ENCODE measurements at regions of chr2 and their contacts with region 1.

Region 1: DNA sequence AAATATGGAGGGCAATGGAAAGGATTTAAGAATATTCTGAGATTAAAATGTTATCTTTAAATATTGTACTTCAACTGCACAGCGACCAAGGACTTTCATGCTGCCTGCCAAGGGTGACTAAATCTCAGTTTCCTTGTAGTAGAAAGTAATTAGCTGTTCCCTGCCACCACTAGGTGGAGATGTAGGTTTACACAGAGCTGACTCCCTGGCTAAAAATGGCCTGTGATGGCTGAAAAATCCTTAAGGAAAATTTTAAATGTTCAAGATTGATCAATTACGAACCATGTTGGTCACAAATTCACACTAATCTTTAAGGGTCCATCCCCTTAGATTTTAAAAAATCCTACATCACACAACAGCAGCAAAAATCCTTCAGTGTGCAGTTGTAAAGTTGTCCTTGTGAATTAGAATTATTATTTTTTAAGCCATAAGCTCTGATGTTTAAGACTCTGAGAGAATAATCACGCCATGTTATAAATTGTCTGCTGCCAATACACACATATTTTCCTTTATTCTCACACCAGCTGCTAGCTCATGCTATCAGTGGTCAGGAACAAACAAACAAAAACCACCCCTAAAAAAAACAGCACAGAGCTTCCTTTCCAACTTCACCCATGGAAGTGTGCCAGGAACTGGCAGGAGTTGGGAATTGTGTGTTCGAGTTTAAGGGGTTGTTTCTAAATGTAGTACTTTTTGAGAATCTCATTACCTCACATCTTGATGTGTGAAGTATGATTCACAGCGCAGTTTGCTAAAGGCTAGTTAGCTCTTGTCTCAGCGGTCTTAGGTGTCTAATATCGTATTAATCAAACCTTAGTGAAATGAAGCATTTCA is 399.8 kb downstream of the TMEM182 start:
- DNase-seq: peak; percentile 16
- ATAC-seq: no peak
- H3K4me3 ChIP-seq: no peak overlapping the region
- H3K27ac ChIP-seq: no peak overlapping the region
- H3K4me1 ChIP-seq: no peaks in the 10 kb centered on the region
- H3K27me3 ChIP-seq: no peaks in the 10 kb centered on the region
- CTCF ChIP-seq: peak; percentile 24 to 66 (median 65); a peak in 5 of 6 replicates
- POLR2A ChIP-seq: no peak
- RAD21 ChIP-seq: peak; percentile 56

Region 2: DNA sequence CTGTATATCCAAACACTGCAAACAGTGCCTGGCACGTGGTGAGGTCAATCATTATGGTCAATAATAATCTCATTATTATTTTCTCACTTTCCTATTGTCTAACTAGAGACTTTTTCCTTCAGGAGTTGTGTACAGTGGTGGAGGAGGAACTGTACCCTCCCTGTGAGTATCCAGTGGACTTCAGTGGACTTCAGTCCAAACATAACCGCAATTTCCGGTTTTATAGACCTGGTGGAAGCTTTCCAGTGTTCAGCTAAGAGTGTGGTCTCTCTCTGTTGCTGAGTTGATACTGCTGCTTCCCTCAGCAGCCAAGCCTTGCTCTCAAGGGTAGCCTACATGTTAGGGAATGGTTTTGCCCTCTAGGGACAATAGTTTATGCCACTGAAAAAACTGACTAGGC is 47.2 kb after region 1 on chr2:
- CTCF ChIA-PET with region 1: no interaction called
- POLR2A ChIA-PET with region 1: no interaction called
- RAD21 ChIA-PET with region 1: no interaction called
- intact Hi-C with region 1: no loop called
- DNase-seq: no peak
- ATAC-seq: no peak
- H3K4me3 ChIP-seq: no peak overlapping the region
- H3K27ac ChIP-seq: no peak overlapping the region
- H3K4me1 ChIP-seq: no peaks in the 10 kb centered on the region
- H3K27me3 ChIP-seq: no peaks in the 10 kb centered on the region
- CTCF ChIP-seq: no peak
- POLR2A ChIP-seq: no peak
- RAD21 ChIP-seq: no peak

Region 3: DNA sequence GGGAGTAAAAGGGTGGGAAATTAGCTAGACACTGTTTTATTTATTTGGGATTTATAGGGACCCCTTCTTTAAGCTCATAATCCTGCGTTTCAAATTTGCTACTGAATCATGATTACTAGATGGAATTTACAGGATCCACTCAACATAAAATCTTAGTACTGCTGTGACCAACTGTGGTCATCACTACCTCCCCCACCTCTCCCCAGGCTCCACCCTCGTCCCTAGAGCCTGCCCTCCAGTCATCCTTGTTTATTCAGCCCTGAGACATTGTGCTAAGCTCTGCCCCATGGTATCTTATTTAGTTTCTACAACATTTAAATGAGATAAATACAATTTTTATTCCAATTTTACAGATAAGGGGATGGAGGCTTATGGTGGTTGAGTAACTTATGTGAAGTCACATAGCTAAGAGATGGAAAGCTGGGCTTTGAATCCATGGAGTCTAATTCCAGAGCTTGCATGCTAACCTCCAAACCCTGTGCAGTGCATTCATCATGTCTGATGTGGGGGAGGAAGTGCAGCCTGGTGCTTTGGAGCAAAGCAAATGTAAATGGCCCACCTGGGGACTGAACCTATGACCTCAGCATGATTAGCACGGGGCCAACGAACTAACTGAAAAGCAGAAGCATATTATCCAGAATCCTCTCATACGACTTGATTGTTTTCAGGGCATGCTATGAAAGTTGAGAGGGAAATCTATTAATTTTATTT is 102.5 kb after region 1 on chr2:
- CTCF ChIA-PET with region 1: no interaction called
- POLR2A ChIA-PET with region 1: no interaction called
- RAD21 ChIA-PET with region 1: no interaction called
- intact Hi-C with region 1: no loop called
- DNase-seq: no peak
- ATAC-seq: no peak
- H3K4me3 ChIP-seq: no peak overlapping the region
- H3K27ac ChIP-seq: no peak overlapping the region
- H3K4me1 ChIP-seq: no peaks in the 10 kb centered on the region
- H3K27me3 ChIP-seq: no peaks in the 10 kb centered on the region
- CTCF ChIP-seq: no peak
- POLR2A ChIP-seq: no peak
- RAD21 ChIP-seq: no peak

Region 4: GRCh38 chr2:104872866-104873688 is 1711.4 kb after region 1 on chr2:
- CTCF ChIA-PET with region 1: no interaction called
- POLR2A ChIA-PET with region 1: no interaction called
- RAD21 ChIA-PET with region 1: no interaction called
- intact Hi-C with region 1: loop called (anchors 5 kb)
- DNase-seq: peak; percentile 10
- ATAC-seq: peak; percentile 81
- H3K4me3 ChIP-seq: no peak overlapping the region
- H3K27ac ChIP-seq: no peak overlapping the region
- H3K4me1 ChIP-seq: no peaks in the 10 kb centered on the region
- H3K27me3 ChIP-seq: peaks cover 4% of the 10 kb centered on the region; the same call in 1 of the 2 replicates
- CTCF ChIP-seq: peak; percentile 9 to 45 (median 37); a peak in 4 of 6 replicates
- POLR2A ChIP-seq: no peak
- RAD21 ChIP-seq: peak; percentile 41